Activated CD4-positive, alpha-beta memory T cell treated with anti-CD3 and anti-CD28 coated beads for 36 hours (primary cell): ENCODE measurements at regions of chr21 and their contacts with region 1.

Region 1: GRCh38 chr21:17780539-17780938 is 38.6 kb downstream of the C21orf91 start:
- DNase-seq: peak; percentile 66
- H3K4me3 Mint-ChIP-seq: peak overlapping the region; percentile 21
- H3K27ac Mint-ChIP-seq: peak overlapping the region; percentile 70
- H3K4me1 Mint-ChIP-seq: peaks cover 84% of the 10 kb centered on the region
- H3K27me3 Mint-ChIP-seq: no peaks in the 10 kb centered on the region

Region 2: DNA sequence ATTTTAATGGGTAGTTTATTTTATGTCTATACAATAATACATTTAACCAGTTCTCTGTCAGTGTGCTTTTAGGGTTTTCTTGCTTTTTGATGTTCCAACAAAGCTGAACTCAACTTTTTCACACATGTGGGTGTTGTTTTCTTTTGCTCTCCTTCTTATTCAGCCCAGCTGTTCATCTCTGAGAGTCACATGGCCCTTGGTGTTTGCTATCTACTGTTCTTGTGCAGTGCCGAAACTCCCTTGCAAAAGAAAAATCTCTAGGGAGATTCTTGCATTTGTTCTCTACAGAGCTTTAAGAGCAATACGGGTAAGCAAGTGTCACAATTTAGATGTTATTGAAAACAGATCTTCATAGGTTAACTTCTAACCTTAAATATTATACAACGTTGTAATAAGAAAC is 548.8 kb before region 1 on chr21:
- CTCF ChIA-PET with region 1: no interaction called
- POLR2A ChIA-PET with region 1: no interaction called
- intact Hi-C with region 1: no loop called
- DNase-seq: no peak
- H3K4me3 Mint-ChIP-seq: no peak overlapping the region
- H3K27ac Mint-ChIP-seq: no peak overlapping the region
- H3K4me1 Mint-ChIP-seq: no peaks in the 10 kb centered on the region
- H3K27me3 Mint-ChIP-seq: no peaks in the 10 kb centered on the region

Region 3: DNA sequence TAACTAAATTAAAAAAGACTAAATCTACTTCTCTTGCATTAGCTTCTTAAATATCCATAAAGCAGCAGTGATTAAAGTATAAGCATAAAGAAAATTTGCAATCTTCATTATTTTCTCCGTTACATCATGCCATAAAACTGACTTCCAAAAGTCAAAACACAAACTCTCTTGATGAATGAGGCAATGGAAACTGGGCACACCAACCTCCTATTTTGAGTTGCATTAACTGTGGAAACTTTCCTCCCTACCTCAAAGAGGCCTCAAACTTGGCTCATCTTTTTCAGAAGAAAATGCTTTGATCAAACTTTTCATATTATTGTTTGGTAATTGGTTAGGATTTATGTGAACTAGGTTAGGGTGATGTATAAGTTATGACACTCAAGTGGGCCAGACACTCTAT is 163.7 kb before region 1 on chr21:
- CTCF ChIA-PET with region 1: no interaction called
- POLR2A ChIA-PET with region 1: no interaction called
- intact Hi-C with region 1: loop called (anchors 1 kb)
- DNase-seq: no peak
- H3K4me3 Mint-ChIP-seq: no peak overlapping the region
- H3K27ac Mint-ChIP-seq: no peak overlapping the region
- H3K4me1 Mint-ChIP-seq: peaks cover 4% of the 10 kb centered on the region
- H3K27me3 Mint-ChIP-seq: no peaks in the 10 kb centered on the region

Region 4: GRCh38 chr21:17688912-17689874 is 91.3 kb before region 1 on chr21:
- CTCF ChIA-PET with region 1: interaction called, 9 read pairs
- POLR2A ChIA-PET with region 1: no interaction called
- intact Hi-C with region 1: loop called (anchors 5 kb)
- DNase-seq: peak; percentile 71
- H3K4me3 Mint-ChIP-seq: no peak overlapping the region
- H3K27ac Mint-ChIP-seq: no peak overlapping the region
- H3K4me1 Mint-ChIP-seq: peaks cover 32% of the 10 kb centered on the region
- H3K27me3 Mint-ChIP-seq: no peaks in the 10 kb centered on the region

Region 5: DNA sequence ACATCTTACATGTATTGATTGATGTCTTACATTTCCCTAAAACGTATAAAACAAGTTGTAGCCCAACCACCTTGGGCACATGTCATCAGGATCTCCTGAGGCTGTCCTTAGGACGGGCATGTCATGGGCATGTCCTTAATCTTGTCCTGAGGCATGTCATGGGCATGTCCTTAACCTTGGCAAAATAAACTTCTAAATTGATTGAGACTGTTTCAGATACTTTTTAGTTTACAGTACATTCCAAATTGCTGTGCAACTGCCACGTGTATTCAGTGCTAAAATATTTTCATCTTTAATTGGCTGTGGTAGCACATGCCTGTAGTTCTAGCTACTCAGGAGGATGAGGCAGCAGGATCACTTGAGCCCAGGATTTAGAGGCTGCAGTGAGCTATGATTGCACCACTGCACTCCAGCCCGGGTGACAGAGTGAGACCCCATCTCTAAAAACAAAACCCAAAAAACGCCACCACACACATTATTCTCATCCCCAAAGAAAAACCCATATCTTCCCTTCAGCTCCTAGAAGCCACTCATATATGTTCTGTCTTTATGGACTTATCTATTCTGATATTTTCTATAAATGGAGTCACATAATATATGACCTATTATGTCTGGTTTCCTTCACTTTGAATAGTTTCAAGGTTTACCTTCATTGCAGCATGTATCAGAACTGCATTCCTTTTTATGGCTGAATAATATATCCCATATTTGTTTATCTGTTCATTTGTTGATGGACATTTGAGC is 71.8 kb before region 1 on chr21:
- CTCF ChIA-PET with region 1: no interaction called
- POLR2A ChIA-PET with region 1: interaction called, 3 read pairs
- intact Hi-C with region 1: loop called (anchors 1 kb)
- DNase-seq: no peak
- H3K4me3 Mint-ChIP-seq: no peak overlapping the region
- H3K27ac Mint-ChIP-seq: no peak overlapping the region
- H3K4me1 Mint-ChIP-seq: peaks cover 13% of the 10 kb centered on the region
- H3K27me3 Mint-ChIP-seq: no peaks in the 10 kb centered on the region

Region 6: DNA sequence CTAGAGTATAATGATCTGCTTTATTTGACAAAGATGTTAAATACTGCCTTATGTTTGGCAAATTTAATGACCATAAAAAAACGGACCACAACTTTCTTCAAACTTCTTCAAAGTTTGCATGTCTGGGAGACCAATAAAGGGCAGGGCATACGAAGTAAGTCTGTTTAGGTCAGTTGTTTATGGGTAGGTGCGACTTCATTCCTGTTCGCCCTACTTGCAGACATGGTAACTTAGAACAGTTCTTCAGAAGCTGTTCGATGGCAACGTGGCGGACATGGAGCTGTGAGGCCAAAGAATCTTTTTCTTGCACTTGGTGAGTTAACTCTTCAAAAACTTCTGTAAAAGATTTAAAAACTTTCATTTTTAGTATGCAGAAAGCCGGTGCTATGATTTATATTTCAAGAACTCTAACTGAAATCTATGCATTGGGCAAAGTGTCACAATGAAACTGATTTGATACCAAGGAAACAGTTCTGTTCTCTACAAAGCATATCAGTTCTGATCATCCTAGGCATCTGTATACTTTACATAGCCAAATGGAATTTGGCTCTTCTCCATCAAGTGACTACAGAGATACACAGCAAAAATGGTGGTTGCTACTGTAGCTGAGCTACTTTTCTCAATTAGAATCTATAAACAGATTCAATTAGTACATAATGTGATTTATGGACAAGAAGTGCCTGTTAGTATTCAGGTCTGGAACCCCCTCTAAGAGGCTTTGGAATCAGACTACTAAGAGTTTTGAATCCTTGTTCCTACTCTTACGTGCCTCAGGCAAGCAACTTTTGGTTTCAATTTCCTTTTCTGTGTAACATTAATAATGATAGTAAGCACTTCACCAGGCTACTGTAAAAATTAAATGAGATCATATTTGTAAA is 12.9 kb after region 1 on chr21:
- CTCF ChIA-PET with region 1: interaction called, 4 read pairs
- POLR2A ChIA-PET with region 1: no interaction called
- intact Hi-C with region 1: loop called (anchors 1 kb)
- DNase-seq: peak; percentile 30
- H3K4me3 Mint-ChIP-seq: peak overlapping the region; percentile 59
- H3K27ac Mint-ChIP-seq: peak overlapping the region; percentile 86
- H3K4me1 Mint-ChIP-seq: peaks cover 72% of the 10 kb centered on the region
- H3K27me3 Mint-ChIP-seq: no peaks in the 10 kb centered on the region

Region 7: DNA sequence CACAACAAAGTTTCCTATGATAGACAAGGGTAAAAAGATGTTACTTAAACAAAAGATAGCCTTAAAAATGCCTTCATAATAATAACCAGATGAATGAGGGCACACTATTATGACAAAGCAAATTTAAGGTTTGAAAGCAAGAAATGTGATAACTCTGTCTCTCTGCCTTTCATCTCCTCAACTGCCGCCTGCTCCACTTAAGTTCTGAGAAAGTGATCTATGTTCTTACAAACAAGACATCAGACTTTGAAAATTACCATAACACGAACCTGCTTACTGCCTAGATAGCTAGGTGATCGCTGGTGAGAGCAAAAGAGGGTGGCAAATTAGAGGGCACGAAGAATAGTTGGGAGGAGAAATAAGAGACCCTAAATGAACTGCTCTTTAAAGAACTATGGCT is 25.4 kb after region 1 on chr21:
- CTCF ChIA-PET with region 1: no interaction called
- POLR2A ChIA-PET with region 1: no interaction called
- intact Hi-C with region 1: no loop called
- DNase-seq: no peak
- H3K4me3 Mint-ChIP-seq: no peak overlapping the region
- H3K27ac Mint-ChIP-seq: peak overlapping the region; percentile 9
- H3K4me1 Mint-ChIP-seq: peaks cover 43% of the 10 kb centered on the region
- H3K27me3 Mint-ChIP-seq: no peaks in the 10 kb centered on the region

Region 8: DNA sequence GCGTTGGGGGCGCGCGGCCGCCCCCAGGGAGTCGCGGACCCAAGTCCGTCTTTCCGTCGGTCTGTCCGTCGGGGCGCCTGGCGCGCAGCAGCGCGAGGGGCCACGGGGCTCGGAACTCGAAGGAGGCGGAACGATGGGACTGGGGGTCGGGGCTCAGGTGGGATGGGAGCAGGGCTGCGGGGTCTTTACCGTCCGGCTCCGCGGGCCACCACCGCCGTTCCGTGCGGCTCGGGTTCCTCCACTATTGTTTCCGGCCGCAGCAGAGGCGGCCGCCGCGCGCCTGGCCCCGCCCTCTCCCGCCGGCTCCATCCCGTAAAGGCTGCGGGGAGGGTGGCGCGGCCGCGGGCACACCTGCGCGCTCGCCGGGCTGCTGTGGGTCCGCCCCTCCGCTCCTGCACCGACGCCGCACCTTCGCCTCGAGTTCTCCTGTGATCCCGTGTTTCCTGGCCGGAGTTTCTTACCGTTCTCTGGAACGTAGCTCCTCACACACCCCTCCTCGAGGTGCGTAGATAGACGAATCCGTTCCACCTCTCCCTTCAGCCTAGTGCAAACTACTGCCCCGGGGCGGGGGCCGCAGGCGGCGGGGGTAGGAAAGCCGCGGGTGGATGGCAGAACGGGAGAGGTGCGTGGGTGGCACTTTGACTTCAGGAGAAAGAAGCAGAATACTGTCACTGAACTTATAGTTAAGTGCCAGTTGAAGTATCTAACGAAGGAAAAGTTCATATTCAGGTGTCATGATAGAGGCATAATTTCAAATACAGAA is 38.8 kb after region 1 on chr21 and contains the start of gene C21orf91:
- CTCF ChIA-PET with region 1: interaction called, 9 read pairs
- POLR2A ChIA-PET with region 1: interaction called, 18 read pairs
- intact Hi-C with region 1: loop called (anchors 1 kb)
- DNase-seq: peak; percentile 92
- H3K4me3 Mint-ChIP-seq: peak within 1 kb of the TSS; percentile 84
- H3K27ac Mint-ChIP-seq: peak within 1 kb of the TSS; percentile 98
- H3K4me1 Mint-ChIP-seq: peaks cover 45% of the 10 kb centered on the region
- H3K27me3 Mint-ChIP-seq: no peaks in the 10 kb centered on the region
- total RNA-seq, gene C21orf91: 23.6 to 24.1 TPM

Region 9: DNA sequence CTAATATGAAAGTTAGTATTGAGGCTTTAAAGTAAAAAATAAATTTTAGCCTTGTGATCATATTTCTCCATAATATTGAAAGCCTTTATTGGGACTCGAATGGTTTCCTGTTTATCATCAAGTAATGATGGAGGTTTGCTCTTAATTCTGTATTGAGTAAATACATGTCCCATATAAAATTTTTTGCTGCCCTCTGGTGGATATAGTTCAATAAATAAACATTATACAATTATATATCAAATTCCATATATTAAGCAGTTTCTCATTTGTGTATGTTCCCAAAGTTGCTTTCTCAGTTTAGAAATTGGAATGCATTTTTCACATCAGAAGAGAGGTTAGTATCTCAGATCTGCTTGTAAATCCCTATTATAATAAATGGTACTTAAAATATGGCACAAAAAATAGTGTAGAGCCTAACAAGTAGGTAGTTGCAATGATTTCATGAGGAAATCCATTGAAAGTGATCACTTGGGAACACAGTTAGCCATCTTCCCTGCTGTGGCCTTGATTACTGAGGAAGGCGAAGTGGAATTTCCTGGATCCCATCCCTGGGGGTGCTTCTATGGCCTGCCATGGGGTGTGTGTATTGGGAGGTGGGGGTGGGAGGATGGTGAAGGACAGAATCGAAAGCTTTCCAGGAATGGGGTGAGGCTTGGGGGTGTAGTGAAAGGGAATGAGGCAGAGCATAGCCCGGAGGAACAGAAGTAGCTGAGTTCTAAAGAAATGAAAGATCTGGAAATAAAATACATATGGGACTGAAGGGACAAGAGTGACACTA is 122.7 kb after region 1 on chr21:
- CTCF ChIA-PET with region 1: interaction called, 3 read pairs
- POLR2A ChIA-PET with region 1: no interaction called
- intact Hi-C with region 1: loop called (anchors 5 kb)
- DNase-seq: no peak
- H3K4me3 Mint-ChIP-seq: no peak overlapping the region
- H3K27ac Mint-ChIP-seq: no peak overlapping the region
- H3K4me1 Mint-ChIP-seq: peaks cover 6% of the 10 kb centered on the region
- H3K27me3 Mint-ChIP-seq: no peaks in the 10 kb centered on the region